HAP-1 (cell line): ENCODE measurements at regions of chr4 and their contacts with region 1.

Region 1: GRCh38 chr4:176377780-176378179 is 58.0 kb downstream of the SPCS3 start:
- DNase-seq: peak in 1 of 2 experiments; percentile 66
- H3K4me3 ChIP-seq: no peak overlapping the region
- H3K4me1 ChIP-seq: no peaks in the 10 kb centered on the region
- H3K27me3 ChIP-seq: no peaks in the 10 kb centered on the region; the same call in 1 of the 2 replicates

Region 2: GRCh38 chr4:176789955-176790354 is 412.2 kb after region 1 on chr4:
- in situ Hi-C with region 1: loop called (anchors 25 kb)
- DNase-seq: peak; percentile 29 to 64
- H3K4me3 ChIP-seq: no peak overlapping the region
- H3K4me1 ChIP-seq: peaks cover 8% of the 10 kb centered on the region
- H3K27me3 ChIP-seq: no peaks in the 10 kb centered on the region